Activated naive CD8-positive, alpha-beta T cell treated with anti-CD3 and anti-CD28 coated beads, Interleukin-2, amount 10 ng/mL, durations not matched to agents 7 days and 5 days (primary cell): ENCODE measurements at regions of chr14 and their contacts with region 1.

Region 1: GRCh38 chr14:50060871-50061663 is 55.3 kb downstream of the VCPKMT start:
- DNase-seq: peak; percentile 65
- ATAC-seq: peak; percentile 11
- H3K4me3 Mint-ChIP-seq: peak overlapping the region; percentile 99
- H3K27ac Mint-ChIP-seq: peak overlapping the region; percentile 100
- H3K4me1 Mint-ChIP-seq: peaks cover 76% of the 10 kb centered on the region
- H3K27me3 Mint-ChIP-seq: no peaks in the 10 kb centered on the region

Region 2: DNA sequence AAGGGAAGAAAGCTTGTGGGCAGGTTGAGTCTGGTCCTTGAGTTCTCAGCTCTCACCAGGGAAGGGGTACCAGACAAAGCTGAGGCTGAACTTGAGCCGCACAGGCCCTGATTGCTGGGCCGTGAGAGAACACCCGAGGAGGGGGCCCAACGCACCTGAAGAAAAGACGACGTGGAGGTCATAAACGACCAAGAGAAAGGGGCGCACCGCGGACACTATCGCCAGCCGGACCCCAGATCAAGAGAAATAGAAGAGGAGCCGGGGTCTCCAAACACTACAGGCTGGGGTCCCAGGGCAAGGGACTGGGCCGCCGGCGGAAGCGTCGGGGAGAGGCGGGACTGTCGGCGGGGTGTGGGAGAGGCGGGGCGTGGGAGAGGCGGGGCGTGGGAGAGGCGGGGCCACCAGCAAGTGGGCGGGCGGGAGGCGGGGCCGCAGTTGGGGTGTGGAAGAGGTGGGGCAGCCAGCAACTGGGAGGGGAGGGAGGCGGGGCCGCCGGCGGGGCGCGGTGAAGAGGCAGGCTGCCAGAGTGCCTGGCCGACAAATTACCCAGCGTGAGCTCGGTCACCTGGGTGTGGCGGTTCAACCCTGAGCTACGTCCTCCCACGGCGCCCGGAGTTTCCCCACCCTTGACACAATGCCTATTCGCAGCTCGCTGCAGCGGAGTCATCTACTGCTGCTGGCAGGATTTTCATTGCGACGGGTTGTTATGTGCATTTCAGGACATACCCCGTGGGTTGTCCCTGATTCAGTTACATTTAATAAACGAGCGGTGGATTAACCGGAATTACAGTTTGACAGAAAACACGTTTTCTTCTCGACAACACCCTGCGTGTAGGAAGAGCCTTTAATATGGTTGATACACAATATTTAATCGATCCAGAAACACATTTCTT is 193.0 kb before region 1 on chr14:
- POLR2A ChIA-PET with region 1: interaction called, 121 read pairs
- DNase-seq: peak; percentile 94
- ATAC-seq: peak; percentile 93
- H3K4me3 Mint-ChIP-seq: peak overlapping the region; percentile 98
- H3K27ac Mint-ChIP-seq: peak overlapping the region; percentile 98
- H3K4me1 Mint-ChIP-seq: peaks cover 13% of the 10 kb centered on the region
- H3K27me3 Mint-ChIP-seq: no peaks in the 10 kb centered on the region

Region 3: DNA sequence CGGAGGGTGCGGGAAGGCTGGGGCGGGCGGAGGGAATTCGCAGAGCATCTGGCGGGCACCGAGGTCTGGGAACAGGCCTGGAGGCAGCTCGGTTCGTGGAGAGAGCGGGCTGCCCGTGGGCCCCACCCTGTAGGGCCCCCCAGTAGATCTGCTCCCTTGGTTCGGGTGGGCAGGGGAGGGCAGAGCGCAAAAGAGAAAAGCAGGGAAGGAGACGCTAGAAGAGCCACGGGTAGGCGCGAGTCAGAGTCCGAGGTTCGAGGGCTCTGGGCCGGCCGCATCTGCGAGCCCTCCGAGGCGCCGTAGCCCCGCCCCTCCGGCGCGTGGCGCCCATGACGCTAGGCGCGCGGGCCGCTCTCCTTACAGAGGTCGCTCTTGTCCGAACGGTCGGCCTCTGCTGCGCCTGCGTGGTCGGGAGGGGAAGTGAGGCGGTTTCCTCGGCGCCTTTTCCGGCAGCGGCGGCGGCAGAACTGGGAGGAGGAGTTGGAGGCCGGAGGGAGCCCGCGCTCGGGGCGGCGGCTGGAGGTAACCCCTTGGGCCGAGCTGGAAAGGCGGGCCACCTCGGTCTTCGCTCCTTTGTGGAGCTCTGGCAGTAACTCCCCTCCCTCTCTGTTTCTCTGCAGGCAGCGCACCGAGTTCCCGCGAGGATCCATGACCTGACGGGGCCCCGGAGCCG is 168.3 kb before region 1 on chr14 and contains the start of gene ARF6:
- POLR2A ChIA-PET with region 1: interaction called, 29 read pairs
- DNase-seq: peak; percentile 98
- ATAC-seq: peak; percentile 89
- H3K4me3 Mint-ChIP-seq: peak within 1 kb of the TSS; percentile 99
- H3K27ac Mint-ChIP-seq: peak within 1 kb of the TSS; percentile 99
- H3K4me1 Mint-ChIP-seq: peaks cover 16% of the 10 kb centered on the region
- H3K27me3 Mint-ChIP-seq: no peaks in the 10 kb centered on the region
- total RNA-seq, gene ARF6: 162 to 169 TPM

Region 4: GRCh38 chr14:50045039-50045711 is 15.9 kb before region 1 on chr14:
- POLR2A ChIA-PET with region 1: interaction called, 73 read pairs
- DNase-seq: peak; percentile 74
- ATAC-seq: peak; percentile 91
- H3K4me3 Mint-ChIP-seq: peak overlapping the region; percentile 54
- H3K27ac Mint-ChIP-seq: peak overlapping the region; percentile 93
- H3K4me1 Mint-ChIP-seq: peaks cover 58% of the 10 kb centered on the region
- H3K27me3 Mint-ChIP-seq: no peaks in the 10 kb centered on the region

Region 5: DNA sequence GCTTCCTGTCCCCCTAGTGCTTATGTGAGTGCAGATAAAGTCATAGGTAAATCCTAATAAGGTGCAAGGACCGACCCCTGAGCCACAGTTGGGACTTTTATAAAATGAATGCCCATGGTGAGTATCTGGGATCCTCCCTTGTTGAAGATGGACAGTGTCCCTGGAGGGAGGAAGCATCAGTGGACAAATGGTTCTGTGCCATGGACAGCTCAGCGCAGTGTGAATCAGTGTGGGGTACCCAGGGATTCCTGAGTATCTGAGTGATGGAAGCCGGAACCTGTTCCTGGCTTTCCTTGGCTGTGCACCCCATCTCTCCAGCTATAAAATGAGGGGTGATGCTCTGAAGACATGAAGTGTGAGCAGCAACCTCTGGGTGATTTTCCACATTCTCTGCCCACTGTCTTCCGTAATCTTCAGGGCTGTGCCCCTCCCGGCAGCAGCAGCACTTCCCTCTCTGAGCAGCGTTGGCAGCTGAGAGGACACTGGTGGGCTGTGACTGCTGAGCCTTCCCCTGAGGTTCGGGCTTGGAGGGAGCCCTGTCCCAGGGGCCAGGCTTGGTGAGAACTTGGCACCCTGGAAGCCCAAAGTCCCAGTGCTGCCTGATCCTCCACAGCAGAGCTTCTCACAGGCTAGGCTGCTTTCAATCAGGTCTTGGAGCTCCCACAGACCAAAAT is 30.3 kb after region 1 on chr14:
- POLR2A ChIA-PET with region 1: interaction called, 83 read pairs
- DNase-seq: no peak
- ATAC-seq: no peak
- H3K4me3 Mint-ChIP-seq: peak overlapping the region; percentile 17
- H3K27ac Mint-ChIP-seq: peak overlapping the region; percentile 77
- H3K4me1 Mint-ChIP-seq: peaks cover 71% of the 10 kb centered on the region
- H3K27me3 Mint-ChIP-seq: no peaks in the 10 kb centered on the region

Region 6: GRCh38 chr14:50139192-50139591 is 78.1 kb after region 1 on chr14:
- POLR2A ChIA-PET with region 1: no interaction called
- DNase-seq: no peak
- ATAC-seq: no peak
- H3K4me3 Mint-ChIP-seq: no peak overlapping the region
- H3K27ac Mint-ChIP-seq: no peak overlapping the region
- H3K4me1 Mint-ChIP-seq: no peaks in the 10 kb centered on the region
- H3K27me3 Mint-ChIP-seq: no peaks in the 10 kb centered on the region